Vagina (tissue), 2 donors: ENCODE measurements at regions of chr2 and their contacts with region 1.

Region 1: GRCh38 chr2:74482801-74483674 is at the starts of genes CCDC142 and TTC31:
- DNase-seq: peak in 1 of 2 donors; percentile 98
- H3K4me3 ChIP-seq: peak within 1 kb of the TSS; percentile 75 to 79
- H3K27ac ChIP-seq: peak within 1 kb of the TSS; percentile 87
- H3K4me1 ChIP-seq: peaks cover 35% of the 10 kb centered on the region
- H3K27me3 ChIP-seq: no peaks in the 10 kb centered on the region
- CTCF ChIP-seq: peak; percentile 49 to 83 (median 76)
- POLR2A ChIP-seq: peak in 1 of 2 donors; percentile 29
- total RNA-seq, gene CCDC142: 41.3 TPM
- total RNA-seq, gene TTC31: 11.8 TPM

Region 2: DNA sequence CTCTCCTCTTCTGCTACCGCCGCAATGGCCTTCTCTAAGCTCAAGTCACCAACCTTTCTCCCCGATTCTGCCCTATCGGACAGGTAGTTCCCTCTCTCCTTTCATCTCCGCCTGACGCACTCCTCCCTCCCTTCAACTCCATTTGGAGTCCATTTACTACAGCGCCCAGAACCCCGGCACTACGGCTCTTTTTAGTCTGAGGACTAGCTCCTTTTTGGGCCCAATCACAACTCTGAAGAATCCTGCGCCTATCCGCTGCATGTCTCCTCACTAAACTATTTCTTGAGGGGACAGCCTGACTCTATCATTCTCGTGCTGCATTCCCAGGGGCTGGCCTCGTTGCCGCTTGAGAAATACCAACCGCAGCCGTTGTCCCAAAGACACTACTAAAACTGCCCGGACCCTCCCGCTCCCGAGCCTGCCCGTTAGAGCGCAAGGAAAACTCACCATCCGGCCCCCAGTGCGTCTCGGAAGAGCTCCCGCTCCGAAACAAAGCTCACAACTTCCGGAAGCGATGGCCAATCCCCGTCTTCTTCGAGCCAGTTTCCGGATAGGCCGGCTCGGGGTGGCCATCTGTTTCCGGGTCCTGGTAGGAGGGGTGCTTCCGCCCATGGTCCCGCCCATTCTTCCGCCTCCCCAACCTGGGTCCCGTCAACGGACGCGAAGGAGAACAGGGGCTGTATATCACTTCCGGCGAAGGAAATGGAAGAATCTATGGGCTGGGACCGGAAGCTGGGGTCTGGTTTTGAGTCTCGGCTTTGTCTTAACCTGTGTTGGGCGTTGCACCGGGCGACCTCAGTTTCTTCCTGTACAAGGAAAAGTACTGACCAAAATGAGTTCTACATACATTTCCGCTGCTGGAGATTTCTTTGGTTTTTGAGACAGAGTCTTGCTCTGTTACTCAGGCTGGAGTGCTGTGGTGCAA is 745.9 kb before region 1 on chr2 and contains the start of gene TPRKB:
- intact Hi-C with region 1: loop called (anchors 10 kb)
- DNase-seq: peak in 1 of 2 donors; percentile 92
- H3K4me3 ChIP-seq: peak within 1 kb of the TSS; percentile 78 to 86
- H3K27ac ChIP-seq: peak within 1 kb of the TSS; percentile 54
- H3K4me1 ChIP-seq: peaks cover 17% of the 10 kb centered on the region
- H3K27me3 ChIP-seq: no peaks in the 10 kb centered on the region
- CTCF ChIP-seq: no peak
- POLR2A ChIP-seq: peak in 1 of 2 donors; percentile 31
- total RNA-seq, gene TPRKB: 18.9 TPM

Region 3: GRCh38 chr2:74414881-74415761 is 67.9 kb before region 1 on chr2:
- intact Hi-C with region 1: no loop called
- DNase-seq: no peak
- H3K4me3 ChIP-seq: peak overlapping the region; percentile 63 to 65
- H3K27ac ChIP-seq: peak overlapping the region; percentile 74
- H3K4me1 ChIP-seq: peaks cover 21% of the 10 kb centered on the region
- H3K27me3 ChIP-seq: no peaks in the 10 kb centered on the region
- CTCF ChIP-seq: peak in 2 of 3 experiments; percentile 11 to 32
- POLR2A ChIP-seq: no peak

Region 4: GRCh38 chr2:74587664-74588277 is 104.7 kb after region 1 on chr2:
- intact Hi-C with region 1: loop called (anchors 2 kb)
- DNase-seq: no peak
- H3K4me3 ChIP-seq: no peak overlapping the region
- H3K27ac ChIP-seq: no peak overlapping the region
- H3K4me1 ChIP-seq: no peaks in the 10 kb centered on the region
- H3K27me3 ChIP-seq: no peaks in the 10 kb centered on the region
- CTCF ChIP-seq: peak; percentile 26 to 70 (median 37)
- POLR2A ChIP-seq: no peak